ENCODE measurements at regions of chr3 and their contacts with region 1.

Region 1: DNA sequence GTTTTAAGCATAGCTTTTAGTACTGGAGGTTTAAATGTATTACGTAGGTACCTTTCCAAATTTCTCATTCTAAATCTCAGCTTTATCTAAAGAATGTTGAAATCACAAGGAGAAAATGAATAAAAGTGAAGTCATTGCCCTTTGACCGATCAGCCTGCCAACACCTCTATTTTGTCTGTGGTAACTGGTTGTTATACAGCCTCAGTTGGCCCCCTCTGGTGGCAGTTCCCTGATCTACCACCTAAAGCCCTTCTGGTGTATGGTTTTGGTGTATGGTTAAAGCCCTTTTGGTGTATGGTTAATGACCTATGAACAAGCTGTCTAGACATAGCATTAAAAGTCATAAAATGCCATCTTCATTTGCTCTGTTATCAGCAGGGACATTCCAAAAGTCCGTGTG is 378.2 kb upstream of the AZI2 start:
- DNase-seq: peak; percentile 59 to 77 (median 68)
- ATAC-seq: peak; percentile 96 to 100 (median 98)
- H3K4me3 ChIP-seq: no peak overlapping the region
- H3K27ac ChIP-seq: no peak overlapping the region
- H3K4me1 ChIP-seq: no peaks in the 10 kb centered on the region
- H3K27me3 ChIP-seq: no peaks in the 10 kb centered on the region
- CTCF ChIP-seq: peak; percentile 25 to 49 (median 38)

Region 2: GRCh38 chr3:28667646-28668621 is 58.9 kb before region 1 on chr3:
- intact Hi-C with region 1: loop called in 1 of 3 experiments (anchors 10 kb)
- DNase-seq: peak; percentile 46 to 81 (median 58)
- ATAC-seq: peak; percentile 94 to 99 (median 97)
- H3K4me3 ChIP-seq: no peak overlapping the region
- H3K27ac ChIP-seq: no peak overlapping the region
- H3K4me1 ChIP-seq: peaks cover 0 to 15% (median 8%) of the 10 kb centered on the region in 3 donors
- H3K27me3 ChIP-seq: no peaks in the 10 kb centered on the region
- CTCF ChIP-seq: peak; percentile 66 to 82 (median 81)

Region 3: DNA sequence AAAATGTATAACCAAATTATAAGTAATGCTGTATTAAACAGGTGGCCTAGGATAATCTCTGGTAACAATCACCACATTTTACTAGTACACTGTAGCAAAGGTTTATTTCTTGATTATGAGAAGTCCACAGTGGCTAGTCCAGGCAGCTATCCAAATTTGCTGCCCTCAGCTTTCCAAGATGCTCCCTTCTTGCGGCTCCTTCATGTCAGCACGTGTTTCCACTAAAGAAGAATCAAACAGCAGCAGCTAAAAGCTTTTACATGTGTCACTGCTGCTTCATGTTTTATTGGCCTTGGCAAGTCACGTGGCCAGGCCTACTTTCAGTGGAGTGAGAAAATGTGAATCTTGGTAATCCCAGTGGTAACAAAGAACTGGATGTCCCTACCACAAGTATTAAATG is 548.5 kb after region 1 on chr3:
- intact Hi-C with region 1: no loop called
- DNase-seq: no peak
- ATAC-seq: no peak
- H3K4me3 ChIP-seq: no peak overlapping the region
- H3K27ac ChIP-seq: no peak overlapping the region
- H3K4me1 ChIP-seq: peaks cover 0 to 4% (median 0%) of the 10 kb centered on the region in 3 donors
- H3K27me3 ChIP-seq: no peaks in the 10 kb centered on the region
- CTCF ChIP-seq: no peak